ENCODE measurements at regions of chr1 and their contacts with region 1.

Region 1: GRCh38 chr1:207828485-207829158 is 76.8 kb downstream of the CD46 start:
- DNase-seq: peak; percentile 79
- H3K4me3 Mint-ChIP-seq: no peak overlapping the region
- H3K27ac Mint-ChIP-seq: peak overlapping the region; percentile 63
- H3K4me1 Mint-ChIP-seq: peaks cover 98% of the 10 kb centered on the region
- H3K27me3 Mint-ChIP-seq: no peaks in the 10 kb centered on the region

Region 2: GRCh38 chr1:206925106-206925736 is 903.4 kb before region 1 on chr1:
- CTCF ChIA-PET with region 1: no interaction called
- intact Hi-C with region 1: loop called (anchors 10 kb)
- DNase-seq: peak; percentile 78
- H3K4me3 Mint-ChIP-seq: no peak overlapping the region
- H3K27ac Mint-ChIP-seq: no peak overlapping the region
- H3K4me1 Mint-ChIP-seq: peaks cover 24% of the 10 kb centered on the region
- H3K27me3 Mint-ChIP-seq: no peaks in the 10 kb centered on the region

Region 3: GRCh38 chr1:207797229-207797961 is 31.2 kb before region 1 on chr1:
- CTCF ChIA-PET with region 1: interaction called, 34 read pairs
- intact Hi-C with region 1: loop called (anchors 1 kb)
- DNase-seq: peak; percentile 94
- H3K4me3 Mint-ChIP-seq: no peak overlapping the region
- H3K27ac Mint-ChIP-seq: no peak overlapping the region
- H3K4me1 Mint-ChIP-seq: peaks cover 29% of the 10 kb centered on the region
- H3K27me3 Mint-ChIP-seq: no peaks in the 10 kb centered on the region

Region 4: GRCh38 chr1:207863893-207864535 is 35.4 kb after region 1 on chr1:
- CTCF ChIA-PET with region 1: interaction called, 342 read pairs
- intact Hi-C with region 1: loop called (anchors 1 kb)
- DNase-seq: peak; percentile 82
- H3K4me3 Mint-ChIP-seq: peak overlapping the region; percentile 52
- H3K27ac Mint-ChIP-seq: peak overlapping the region; percentile 83
- H3K4me1 Mint-ChIP-seq: peaks cover 63% of the 10 kb centered on the region
- H3K27me3 Mint-ChIP-seq: no peaks in the 10 kb centered on the region

Region 5: DNA sequence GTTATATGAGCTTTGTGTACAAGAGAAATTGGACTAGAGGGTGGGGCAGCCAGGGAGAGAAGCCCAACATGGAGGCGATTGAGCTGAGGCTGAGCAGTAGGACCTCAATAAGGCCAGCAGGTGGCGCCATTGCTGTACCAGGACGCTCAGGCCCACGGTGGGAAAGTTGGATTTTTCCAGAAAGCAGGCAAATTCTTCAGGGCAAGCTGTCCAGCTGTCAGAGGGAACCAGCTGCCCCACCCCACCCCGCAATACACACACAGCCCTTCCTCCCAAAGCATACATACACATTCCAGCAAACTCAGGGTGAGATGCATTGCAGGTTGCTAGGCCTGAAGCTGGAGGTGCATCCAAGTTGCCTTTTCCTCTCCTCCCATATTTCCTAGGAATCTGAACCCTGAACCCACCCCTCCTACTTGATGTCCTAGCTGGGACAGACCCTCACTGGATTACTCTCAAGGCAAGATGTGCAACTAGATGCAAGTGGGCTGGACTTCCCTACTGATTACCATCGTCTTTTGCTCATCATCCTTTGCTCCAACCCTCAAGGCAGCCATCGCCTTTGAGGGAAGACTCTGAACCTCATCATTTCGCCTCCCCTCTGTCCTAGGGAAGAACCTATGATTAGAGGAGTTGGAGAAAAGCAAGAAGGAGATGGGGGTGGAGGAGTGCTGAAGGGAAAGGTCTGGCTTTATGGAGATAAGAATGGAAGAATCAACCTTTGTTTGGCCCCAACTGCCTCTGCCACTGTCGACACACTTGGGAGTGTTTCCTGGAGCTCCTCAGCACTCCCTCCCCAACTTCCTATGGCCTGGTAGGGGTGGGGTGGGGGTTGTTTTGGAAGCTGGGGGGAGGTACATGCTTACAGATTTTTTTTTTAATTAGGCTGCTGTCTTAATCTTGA is 56.8 kb after region 1 on chr1:
- CTCF ChIA-PET with region 1: interaction called, 47 read pairs
- intact Hi-C with region 1: loop called (anchors 1 kb)
- DNase-seq: peak; percentile 85
- H3K4me3 Mint-ChIP-seq: no peak overlapping the region
- H3K27ac Mint-ChIP-seq: peak overlapping the region; percentile 97
- H3K4me1 Mint-ChIP-seq: peaks cover 29% of the 10 kb centered on the region
- H3K27me3 Mint-ChIP-seq: no peaks in the 10 kb centered on the region

Region 6: GRCh38 chr1:209755926-209756614 is 1927.4 kb after region 1 on chr1 and contains the start of gene TRAF3IP3:
- CTCF ChIA-PET with region 1: no interaction called
- intact Hi-C with region 1: loop called (anchors 10 kb)
- DNase-seq: peak; percentile 90
- H3K4me3 Mint-ChIP-seq: peak within 1 kb of the TSS; percentile 92
- H3K27ac Mint-ChIP-seq: peak within 1 kb of the TSS; percentile 98
- H3K4me1 Mint-ChIP-seq: peaks cover 75% of the 10 kb centered on the region
- H3K27me3 Mint-ChIP-seq: no peaks in the 10 kb centered on the region
- total RNA-seq, gene TRAF3IP3: 107 to 113 TPM

Measured in activated naive CD4-positive, alpha-beta T cell treated with anti-CD3 and anti-CD28 coated beads for 36 hours (primary cell).